Caco-2 (cell line): ENCODE measurements at regions of chr5 and their contacts with region 1.

Region 1: DNA sequence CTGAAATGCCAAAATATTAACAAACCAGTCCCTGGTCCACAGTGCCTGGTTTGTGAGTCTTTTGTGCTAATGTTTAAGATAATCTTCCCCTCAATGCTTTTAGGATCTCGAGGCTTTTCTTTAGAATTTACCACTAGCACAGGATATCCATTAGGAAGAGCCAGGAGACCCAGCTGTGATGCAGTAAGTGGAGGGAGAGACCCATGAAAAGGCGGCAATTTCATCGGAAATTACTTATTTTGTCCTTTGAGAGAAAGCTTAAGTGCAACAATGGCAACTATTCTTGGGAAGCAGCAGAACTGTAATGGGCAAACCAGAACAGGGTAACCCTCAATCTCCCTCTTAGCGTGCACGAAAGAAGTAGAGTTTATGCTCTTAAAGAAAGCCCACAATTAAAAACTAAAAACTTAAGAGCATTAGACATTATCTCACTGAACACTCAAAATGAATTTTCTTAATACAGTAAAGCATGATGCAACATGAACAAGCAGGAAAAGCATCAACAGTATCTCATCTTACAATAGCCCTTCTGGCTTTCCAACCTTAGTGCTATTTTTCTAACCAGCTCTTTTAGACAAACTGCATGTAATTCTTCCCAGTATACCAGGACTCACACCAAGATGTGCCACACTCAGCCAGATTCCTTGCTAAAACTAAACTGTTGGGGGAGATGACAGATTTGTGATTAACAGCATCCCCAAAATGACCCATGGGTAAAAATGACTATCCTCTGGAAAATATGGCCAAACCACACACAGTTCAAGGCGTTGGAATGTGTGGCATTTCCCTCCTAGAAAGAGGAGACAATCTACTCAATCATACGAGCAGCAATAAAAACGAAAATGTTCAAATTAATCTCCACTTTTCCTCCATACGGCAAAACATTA is 36.4 kb downstream of the PWWP2A start:
- DNase-seq: no peak
- H3K4me3 ChIP-seq: no peak overlapping the region
- H3K4me3 Mint-ChIP-seq: no peak overlapping the region
- H3K27ac Mint-ChIP-seq: no peak overlapping the region
- H3K4me1 ChIP-seq: peaks cover 34% of the 10 kb centered on the region
- H3K4me1 Mint-ChIP-seq: peaks cover 25% of the 10 kb centered on the region
- H3K27me3 ChIP-seq: no peaks in the 10 kb centered on the region
- H3K27me3 Mint-ChIP-seq: no peaks in the 10 kb centered on the region
- CTCF ChIP-seq: no peak

Region 2: DNA sequence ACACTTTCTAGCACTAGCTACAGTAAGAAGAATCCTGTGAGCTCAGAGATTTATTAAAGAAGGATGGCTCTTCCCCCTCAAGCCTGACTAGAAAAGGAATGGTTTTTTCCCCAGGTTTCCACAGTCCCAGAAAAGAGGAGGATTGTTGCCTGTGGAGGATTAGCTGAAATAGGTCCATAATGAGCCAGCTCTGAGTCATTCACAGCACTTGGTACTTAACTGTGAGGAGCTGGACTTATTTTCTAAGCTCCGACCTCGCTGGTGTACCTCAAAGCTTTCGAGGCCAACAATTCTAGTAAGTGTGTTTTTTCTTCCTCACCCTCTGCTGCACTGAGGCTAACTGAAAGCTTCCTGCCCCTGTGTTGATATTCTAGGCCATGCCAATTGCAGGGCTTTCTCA is 530.1 kb before region 1 on chr5:
- CTCF ChIA-PET with region 1: no interaction called
- POLR2A ChIA-PET with region 1: no interaction called
- intact Hi-C with region 1: no loop called
- DNase-seq: no peak
- H3K4me3 ChIP-seq: no peak overlapping the region
- H3K4me3 Mint-ChIP-seq: no peak overlapping the region
- H3K27ac Mint-ChIP-seq: no peak overlapping the region
- H3K4me1 ChIP-seq: no peaks in the 10 kb centered on the region
- H3K4me1 Mint-ChIP-seq: no peaks in the 10 kb centered on the region
- H3K27me3 ChIP-seq: no peaks in the 10 kb centered on the region
- H3K27me3 Mint-ChIP-seq: peaks cover 14% of the 10 kb centered on the region
- CTCF ChIP-seq: no peak

Region 3: DNA sequence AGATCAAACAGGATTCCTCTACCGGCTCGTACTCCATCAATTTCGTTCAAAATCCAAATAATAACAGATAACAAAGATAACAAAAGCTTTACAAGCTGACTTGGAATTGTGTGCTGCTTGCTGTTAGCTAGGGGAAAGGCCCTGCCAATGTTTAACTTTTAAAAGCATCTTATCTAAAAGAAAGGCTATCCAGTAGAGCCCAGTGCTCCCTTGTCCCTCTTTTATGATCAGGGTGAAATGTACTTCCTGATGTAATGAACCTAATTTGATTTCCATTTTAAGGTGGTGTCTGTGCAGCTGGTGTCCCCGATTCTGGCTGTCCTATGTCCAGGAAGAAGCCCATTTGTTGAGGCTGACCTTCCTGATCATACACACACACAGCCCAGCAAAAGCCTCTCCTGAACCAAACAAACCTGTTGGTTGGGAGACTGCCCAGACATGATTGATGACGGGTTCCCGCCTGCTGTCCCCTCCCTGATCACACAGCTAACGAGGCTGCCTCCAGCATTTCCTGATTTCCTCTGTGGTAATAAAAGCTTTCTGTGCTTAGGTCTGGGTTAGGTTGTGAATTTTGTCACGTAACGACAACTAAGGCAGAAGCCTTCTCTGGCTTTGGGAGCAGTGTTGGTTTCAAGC is 17.7 kb before region 1 on chr5:
- CTCF ChIA-PET with region 1: interaction called, 10 read pairs
- POLR2A ChIA-PET with region 1: interaction called, 4 read pairs
- intact Hi-C with region 1: loop called (anchors 1 kb)
- DNase-seq: peak; percentile 84 to 93
- H3K4me3 ChIP-seq: no peak overlapping the region
- H3K4me3 Mint-ChIP-seq: peak overlapping the region; percentile 60
- H3K27ac Mint-ChIP-seq: peak overlapping the region; percentile 86
- H3K4me1 ChIP-seq: peaks cover 30% of the 10 kb centered on the region
- H3K4me1 Mint-ChIP-seq: peaks cover 13% of the 10 kb centered on the region
- H3K27me3 ChIP-seq: no peaks in the 10 kb centered on the region
- H3K27me3 Mint-ChIP-seq: no peaks in the 10 kb centered on the region
- CTCF ChIP-seq: no peak

Region 4: GRCh38 chr5:160155017-160155745 is 72.3 kb after region 1 on chr5:
- CTCF ChIA-PET with region 1: no interaction called
- POLR2A ChIA-PET with region 1: no interaction called
- intact Hi-C with region 1: loop called (anchors 1 kb)
- DNase-seq: peak; percentile 46 to 66
- H3K4me3 ChIP-seq: no peak overlapping the region
- H3K4me3 Mint-ChIP-seq: peak overlapping the region; percentile 38
- H3K27ac Mint-ChIP-seq: peak overlapping the region; percentile 90
- H3K4me1 ChIP-seq: peaks cover 22% of the 10 kb centered on the region
- H3K4me1 Mint-ChIP-seq: peaks cover 17% of the 10 kb centered on the region
- H3K27me3 ChIP-seq: no peaks in the 10 kb centered on the region
- H3K27me3 Mint-ChIP-seq: no peaks in the 10 kb centered on the region
- CTCF ChIP-seq: no peak

Region 5: DNA sequence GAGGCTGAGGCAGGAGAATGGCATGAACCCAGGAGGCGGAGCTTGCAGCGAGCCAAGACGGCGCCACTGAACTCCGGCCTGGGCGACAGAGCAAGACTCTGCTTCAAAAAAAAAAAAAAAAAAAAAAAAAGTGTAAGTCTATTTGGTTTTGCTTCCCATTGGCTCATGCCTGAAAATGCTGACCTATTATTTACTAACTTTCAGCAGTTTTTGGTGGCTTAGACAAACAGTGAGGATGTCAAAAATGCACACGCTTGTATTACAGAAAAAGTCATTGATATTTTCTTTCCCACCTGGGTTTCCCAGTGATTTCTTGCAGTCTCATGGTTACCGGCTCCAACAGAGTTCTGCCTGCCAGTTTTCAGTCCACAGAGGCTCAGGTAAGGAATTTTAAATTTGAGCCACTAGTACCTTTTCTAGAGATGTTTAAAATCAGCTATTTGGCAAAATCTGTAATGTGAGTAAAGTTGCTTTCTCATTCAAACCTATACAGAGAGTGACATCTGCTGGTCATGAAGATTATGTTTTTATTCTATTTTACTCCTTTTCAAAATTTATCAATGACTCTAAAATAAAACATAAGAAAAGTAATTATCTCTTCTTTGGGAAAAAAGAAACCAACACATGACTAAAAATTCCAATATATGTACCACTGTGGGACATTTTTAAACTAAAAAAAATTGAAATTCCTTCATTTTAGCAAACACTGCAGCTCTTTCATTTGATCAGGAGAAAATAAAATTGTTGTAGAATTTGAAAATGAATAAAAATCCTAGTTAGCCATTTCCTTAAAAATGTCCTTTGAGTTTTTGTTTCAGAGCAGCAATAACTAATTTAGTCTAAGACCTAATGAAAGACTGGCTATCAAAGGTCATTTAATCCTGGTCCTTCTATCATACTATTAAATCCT is 308.2 kb after region 1 on chr5:
- CTCF ChIA-PET with region 1: interaction called, 7 read pairs
- POLR2A ChIA-PET with region 1: no interaction called
- intact Hi-C with region 1: loop called (anchors 1 kb)
- DNase-seq: no peak
- H3K4me3 ChIP-seq: no peak overlapping the region
- H3K4me3 Mint-ChIP-seq: no peak overlapping the region
- H3K27ac Mint-ChIP-seq: no peak overlapping the region
- H3K4me1 ChIP-seq: no peaks in the 10 kb centered on the region
- H3K4me1 Mint-ChIP-seq: no peaks in the 10 kb centered on the region
- H3K27me3 ChIP-seq: no peaks in the 10 kb centered on the region
- H3K27me3 Mint-ChIP-seq: no peaks in the 10 kb centered on the region
- CTCF ChIP-seq: peak; percentile 43 to 49